Right ventricle myocardium inferior (tissue), 1 donor: ENCODE measurements at regions of chr10 and their contacts with region 1.

Region 1: DNA sequence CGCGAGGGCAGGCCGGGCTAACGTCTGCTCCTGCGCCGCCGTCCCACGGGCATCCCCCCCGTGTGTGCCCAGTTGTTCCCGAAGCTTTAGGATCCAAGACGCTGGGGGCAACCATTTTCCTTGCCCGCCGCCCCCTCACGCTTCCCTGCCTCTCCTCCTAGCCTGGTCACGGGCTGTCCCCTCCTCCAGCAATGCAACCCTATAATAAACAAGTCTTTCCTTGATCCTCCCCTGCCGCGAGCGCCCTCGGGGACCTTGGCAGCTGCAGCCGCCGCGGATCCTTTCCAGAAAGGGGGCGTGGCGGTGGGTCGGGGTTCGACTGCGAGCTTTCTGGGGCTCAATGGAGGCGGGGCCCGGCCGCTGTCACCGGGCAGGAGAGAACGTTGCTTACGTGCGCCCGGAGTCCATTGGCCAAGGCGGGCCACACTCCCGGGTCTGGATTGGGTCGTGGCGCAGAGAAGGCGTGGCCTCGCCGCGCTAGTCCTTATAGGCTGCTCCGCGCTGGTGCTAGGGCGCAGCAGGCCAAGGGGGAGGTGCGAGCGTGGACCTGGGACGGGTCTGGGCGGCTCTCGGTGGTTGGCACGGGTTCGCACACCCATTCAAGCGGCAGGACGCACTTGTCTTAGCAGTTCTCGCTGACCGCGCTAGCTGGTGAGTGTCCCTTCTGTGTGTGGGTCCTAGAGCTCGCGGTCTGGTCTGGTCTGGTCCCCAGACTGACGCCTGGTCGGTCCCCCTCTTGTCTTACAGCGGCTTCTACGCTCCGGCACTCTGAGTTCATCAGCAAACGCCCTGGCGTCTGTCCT is at the start of gene DDIT4:
- DNase-seq: peak; percentile 100
- ATAC-seq: peak; percentile 93
- total RNA-seq, gene DDIT4: 71.4 TPM

Region 2: DNA sequence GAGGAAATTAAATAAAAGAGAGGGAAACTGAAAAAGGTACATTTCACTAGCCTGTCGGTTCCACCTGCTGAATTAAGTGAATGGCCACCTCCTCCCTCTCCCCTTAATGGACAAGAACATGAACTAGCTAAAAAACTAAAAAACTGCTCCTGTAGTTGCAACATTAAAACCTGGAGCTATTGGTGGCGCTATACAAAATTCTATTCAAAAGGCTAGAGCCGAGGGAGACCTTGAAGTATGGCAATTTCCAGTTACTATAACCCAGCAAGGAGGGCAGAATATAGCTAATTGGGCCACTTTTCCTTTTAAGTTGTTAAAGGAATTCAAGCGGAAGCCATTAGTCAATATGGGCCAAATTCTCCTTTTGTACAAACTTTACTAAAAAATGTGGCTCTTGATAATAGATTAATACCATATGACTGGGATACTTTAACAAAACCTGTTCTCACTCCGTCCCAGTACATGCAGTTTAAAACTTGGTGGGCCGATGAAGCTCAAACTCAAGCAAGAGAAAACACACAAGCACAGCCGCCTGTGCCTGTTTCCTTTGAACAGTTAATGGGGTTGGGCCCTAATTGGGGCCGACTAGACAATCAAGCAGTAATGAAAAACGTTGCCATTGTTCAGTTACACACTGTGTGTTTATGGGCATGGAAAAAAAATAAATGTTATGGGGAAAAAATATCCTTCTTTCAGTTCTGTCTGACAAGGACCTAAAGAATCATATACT is 315.9 kb before region 1 on chr10:
- intact Hi-C with region 1: no loop called
- DNase-seq: no peak
- ATAC-seq: no peak

Region 3: GRCh38 chr10:72133517-72133916 is 140.1 kb before region 1 on chr10:
- intact Hi-C with region 1: loop called (anchors 5 kb)
- DNase-seq: no peak
- ATAC-seq: peak; percentile 46

Region 4: GRCh38 chr10:72248468-72249151 is 25.0 kb before region 1 on chr10:
- intact Hi-C with region 1: loop called (anchors 2 kb)
- DNase-seq: peak; percentile 89
- ATAC-seq: peak; percentile 85

Region 5: DNA sequence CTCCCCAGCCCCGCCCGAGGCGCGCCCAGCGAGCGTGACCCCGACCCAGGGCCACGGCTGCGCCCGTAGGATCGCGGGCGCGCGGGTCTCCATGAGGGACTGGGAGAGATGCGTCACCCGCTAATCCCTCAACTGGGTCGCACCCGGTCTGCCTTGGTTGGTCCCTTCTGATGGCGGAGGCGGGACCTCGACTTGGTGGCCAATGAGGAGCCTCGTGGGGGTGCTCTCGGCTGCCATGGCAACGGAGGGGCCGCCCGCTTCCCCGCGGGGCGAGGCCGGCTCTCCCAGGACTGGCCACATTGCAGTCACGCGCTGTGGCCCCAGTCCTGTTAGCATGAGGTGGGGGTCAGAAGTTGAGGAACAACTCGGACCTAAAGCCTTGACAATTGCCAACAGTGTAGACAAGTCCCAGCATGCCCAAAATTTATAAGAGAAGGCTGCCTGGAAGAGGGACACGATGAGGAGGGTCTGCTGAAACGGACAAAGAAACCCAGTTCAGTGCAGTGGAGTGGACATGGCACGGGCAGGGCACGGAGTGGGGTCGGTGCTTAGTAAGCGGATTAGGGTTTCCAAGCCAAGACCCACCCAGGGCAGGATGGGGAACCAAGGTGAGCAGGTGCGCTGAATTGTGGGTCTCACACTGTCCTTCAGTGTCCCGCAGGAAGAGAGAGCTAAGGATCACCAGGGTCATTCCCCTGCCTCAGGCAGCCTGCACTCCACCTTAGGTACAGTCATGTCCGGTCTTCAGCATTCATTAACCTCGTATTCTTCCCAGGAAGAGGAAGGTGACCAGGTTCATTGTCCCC is 24.6 kb after region 1 on chr10:
- intact Hi-C with region 1: loop called (anchors 2 kb)
- DNase-seq: peak; percentile 98
- ATAC-seq: peak; percentile 97

Region 6: DNA sequence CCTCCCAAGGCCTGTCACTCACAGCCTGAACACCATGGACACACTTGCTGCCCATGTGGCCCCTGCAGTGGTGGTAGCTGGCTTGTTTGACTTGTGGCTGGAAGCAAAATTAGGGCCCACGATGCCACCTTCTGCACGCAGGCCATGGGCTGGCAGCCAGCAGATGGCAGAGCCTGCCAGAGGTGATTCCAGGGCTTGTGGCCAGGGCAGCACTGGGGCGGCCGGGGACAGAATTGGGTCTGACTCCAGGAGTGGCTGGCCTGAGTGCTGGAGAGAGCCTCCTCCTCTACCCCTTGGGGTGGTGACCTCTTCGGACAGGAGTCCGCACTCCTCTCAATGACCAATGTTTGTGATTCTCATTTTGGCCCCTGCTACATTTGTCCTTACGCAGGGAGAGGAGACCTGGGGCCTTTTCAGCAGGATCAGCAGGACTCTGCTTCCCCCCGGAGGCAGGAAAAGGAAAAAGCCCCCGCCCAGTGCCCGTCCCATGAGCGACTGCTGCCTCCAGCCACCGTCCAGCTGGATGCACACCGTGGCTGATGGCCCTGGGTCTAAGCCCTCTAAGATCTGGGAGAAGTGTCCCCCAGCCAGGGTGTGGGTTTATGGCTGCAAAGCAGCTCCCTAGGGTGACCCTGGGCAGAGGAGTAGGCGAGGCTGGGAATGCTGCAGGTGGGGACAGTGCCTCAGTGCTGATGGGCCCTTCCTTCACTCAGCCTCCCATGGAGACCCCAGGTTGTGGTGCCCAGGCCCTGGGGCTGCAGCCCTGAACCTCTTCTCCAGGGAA is 54.6 kb after region 1 on chr10:
- intact Hi-C with region 1: loop called (anchors 2 kb)
- DNase-seq: peak; percentile 83
- ATAC-seq: peak; percentile 56

Region 7: GRCh38 chr10:72784551-72785351 is 511.1 kb after region 1 on chr10:
- intact Hi-C with region 1: no loop called
- DNase-seq: no peak
- ATAC-seq: peak; percentile 76

Region 8: GRCh38 chr10:72904806-72905205 is 631.2 kb after region 1 on chr10:
- intact Hi-C with region 1: no loop called
- DNase-seq: no peak
- ATAC-seq: no peak